Right ventricle myocardium superior (tissue), 1 donor: ENCODE measurements at regions of chr1 and their contacts with region 1.

Region 1: GRCh38 chr1:65687428-65688214 is 105.1 kb upstream of the PDE4B start:
- DNase-seq: peak; percentile 88
- ATAC-seq: peak; percentile 92

Region 2: GRCh38 chr1:65235867-65236805 is 451.5 kb before region 1 on chr1:
- intact Hi-C with region 1: loop called (anchors 5 kb)
- DNase-seq: no peak
- ATAC-seq: no peak

Region 3: DNA sequence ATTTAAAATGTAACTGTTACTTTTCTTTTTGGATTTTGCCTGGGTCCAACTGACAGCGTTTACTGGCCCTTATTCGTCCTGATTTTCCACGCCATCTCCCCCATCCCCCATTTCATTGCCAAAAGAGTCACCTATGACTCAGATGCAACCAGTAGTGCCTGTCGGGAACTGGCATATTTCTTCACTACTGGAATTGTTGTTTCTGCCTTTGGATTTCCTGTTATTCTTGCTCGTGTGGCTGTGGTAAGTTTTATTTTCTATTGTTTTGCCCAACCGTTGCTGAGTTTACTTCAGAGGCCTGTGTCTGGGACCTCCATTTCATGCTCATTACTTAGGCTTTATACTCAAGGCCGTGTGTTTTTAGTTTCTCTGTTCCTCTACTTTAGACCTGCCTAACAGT is 257.8 kb before region 1 on chr1:
- intact Hi-C with region 1: loop called (anchors 5 kb)
- DNase-seq: no peak
- ATAC-seq: no peak

Region 4: GRCh38 chr1:65467536-65467935 is 220.1 kb before region 1 on chr1:
- intact Hi-C with region 1: no loop called
- DNase-seq: no peak
- ATAC-seq: no peak